SK-N-SH (cell line): ENCODE measurements at regions of chr11 and their contacts with region 1.

Region 1: GRCh38 chr11:13238879-13239514 is 38.6 kb upstream of the BMAL1 start:
- DNase-seq: peak; percentile 32
- H3K4me3 ChIP-seq: no peak overlapping the region; a peak in 1 of 4 replicates
- H3K27ac ChIP-seq: no peak overlapping the region
- H3K4me1 ChIP-seq: no peaks in the 10 kb centered on the region
- H3K27me3 ChIP-seq: no peaks in the 10 kb centered on the region
- CTCF ChIP-seq: peak; percentile 91
- EP300 ChIP-seq: no peak
- RAD21 ChIP-seq: peak; percentile 67

Region 2: DNA sequence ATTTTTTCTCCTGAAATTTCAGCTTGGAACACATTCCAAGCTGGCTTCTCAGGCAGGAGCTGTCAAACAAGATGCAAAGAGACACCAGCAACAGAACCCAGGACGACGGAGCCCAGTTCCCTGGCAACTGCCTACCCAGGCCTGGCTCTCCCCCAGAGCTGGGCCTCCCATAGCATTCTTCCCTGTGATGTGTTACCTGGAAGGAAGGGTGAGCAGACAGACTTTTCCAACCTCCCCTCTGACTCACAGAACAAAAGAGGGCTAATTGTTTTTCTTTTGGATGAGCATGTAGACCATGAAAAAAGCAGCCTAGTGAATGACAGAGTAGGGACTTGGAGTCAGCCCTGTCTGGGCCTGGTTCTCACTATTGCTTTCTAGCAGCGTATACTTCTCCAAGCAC is 16.7 kb before region 1 on chr11:
- CTCF ChIA-PET with region 1: interaction called, 25 read pairs
- POLR2A ChIA-PET with region 1: no interaction called
- DNase-seq: no peak
- H3K4me3 ChIP-seq: no peak overlapping the region
- H3K27ac ChIP-seq: peak overlapping the region; percentile 59 to 83; a peak in 3 of 4 replicates
- H3K4me1 ChIP-seq: peaks cover 23 to 35% of the 10 kb centered on the region in 2 experiments
- H3K27me3 ChIP-seq: no peaks in the 10 kb centered on the region
- CTCF ChIP-seq: no peak
- EP300 ChIP-seq: peak in 1 of 2 experiments; percentile 52; a peak in 1 of 4 replicates
- RAD21 ChIP-seq: no peak

Region 3: GRCh38 chr11:13249996-13250395 is 11.0 kb after region 1 on chr11:
- CTCF ChIA-PET with region 1: interaction called, 26 read pairs
- POLR2A ChIA-PET with region 1: no interaction called
- DNase-seq: no peak
- H3K4me3 ChIP-seq: no peak overlapping the region
- H3K27ac ChIP-seq: no peak overlapping the region
- H3K4me1 ChIP-seq: no peaks in the 10 kb centered on the region
- H3K27me3 ChIP-seq: no peaks in the 10 kb centered on the region
- CTCF ChIP-seq: peak; percentile 50
- EP300 ChIP-seq: no peak
- RAD21 ChIP-seq: peak; percentile 56

Region 4: GRCh38 chr11:13256216-13256615 is 17.2 kb after region 1 on chr11:
- CTCF ChIA-PET with region 1: interaction called, 26 read pairs
- POLR2A ChIA-PET with region 1: no interaction called
- DNase-seq: no peak
- H3K4me3 ChIP-seq: no peak overlapping the region
- H3K27ac ChIP-seq: peak overlapping the region in 1 of 2 experiments; percentile 15; a peak in 2 of 4 replicates
- H3K4me1 ChIP-seq: peaks cover 4 to 10% of the 10 kb centered on the region in 2 experiments; a peak in 3 of 4 replicates
- H3K27me3 ChIP-seq: no peaks in the 10 kb centered on the region
- CTCF ChIP-seq: no peak
- EP300 ChIP-seq: no peak
- RAD21 ChIP-seq: no peak